Colonic mucosa (tissue), 4 donors: ENCODE measurements at regions of chrX and their contacts with region 1.

Region 1: GRCh38 chrX:13515211-13515930 is 54.0 kb upstream of the EGFL6 start:
- DNase-seq: no peak
- H3K4me3 ChIP-seq: no peak overlapping the region
- H3K27ac ChIP-seq: no peak overlapping the region
- H3K4me1 ChIP-seq: no peaks in the 10 kb centered on the region
- H3K27me3 ChIP-seq: no peaks in the 10 kb centered on the region
- CTCF ChIP-seq: no peak

Region 2: GRCh38 chrX:13750204-13750603 is 234.8 kb after region 1 on chrX:
- intact Hi-C with region 1: loop called (anchors 10 kb)
- DNase-seq: no peak
- H3K4me3 ChIP-seq: no peak overlapping the region
- H3K27ac ChIP-seq: no peak overlapping the region
- H3K4me1 ChIP-seq: no peaks in the 10 kb centered on the region
- H3K27me3 ChIP-seq: no peaks in the 10 kb centered on the region
- CTCF ChIP-seq: peak; percentile 40